ENCODE measurements at regions of chr17 and their contacts with region 1.

Region 1: GRCh38 chr17:77319211-77320043 is 178.7 kb downstream of the SEC14L1 start:
- DNase-seq: peak; percentile 86
- ATAC-seq: peak; percentile 48
- H3K4me3 ChIP-seq: peak overlapping the region; percentile 36; the same call in 1 of the 2 replicates
- H3K27ac ChIP-seq: peak overlapping the region; percentile 96
- H3K4me1 ChIP-seq: peaks cover 59% of the 10 kb centered on the region
- H3K27me3 ChIP-seq: no peaks in the 10 kb centered on the region
- CTCF ChIP-seq: no peak
- POLR2A ChIP-seq: peak; percentile 41; the same call in 1 of the 2 replicates
- RAD21 ChIP-seq: no peak

Region 2: GRCh38 chr17:77088455-77089123 is 230.8 kb before region 1 on chr17:
- CTCF ChIA-PET with region 1: no interaction called
- POLR2A ChIA-PET with region 1: no interaction called
- dilution Hi-C with region 1: no loop called
- in situ Hi-C with region 1: no loop called
- intact Hi-C with region 1: loop called (anchors 5 kb)
- DNase-seq: peak; percentile 98
- ATAC-seq: peak; percentile 95
- H3K4me3 ChIP-seq: peak overlapping the region; percentile 61
- H3K27ac ChIP-seq: peak overlapping the region; percentile 78
- H3K4me1 ChIP-seq: no peaks in the 10 kb centered on the region
- H3K27me3 ChIP-seq: peaks cover 2% of the 10 kb centered on the region; the same call in 1 of the 2 replicates
- CTCF ChIP-seq: peak; percentile 90
- POLR2A ChIP-seq: peak; percentile 62; the same call in 1 of the 2 replicates
- RAD21 ChIP-seq: peak; percentile 56

Region 3: DNA sequence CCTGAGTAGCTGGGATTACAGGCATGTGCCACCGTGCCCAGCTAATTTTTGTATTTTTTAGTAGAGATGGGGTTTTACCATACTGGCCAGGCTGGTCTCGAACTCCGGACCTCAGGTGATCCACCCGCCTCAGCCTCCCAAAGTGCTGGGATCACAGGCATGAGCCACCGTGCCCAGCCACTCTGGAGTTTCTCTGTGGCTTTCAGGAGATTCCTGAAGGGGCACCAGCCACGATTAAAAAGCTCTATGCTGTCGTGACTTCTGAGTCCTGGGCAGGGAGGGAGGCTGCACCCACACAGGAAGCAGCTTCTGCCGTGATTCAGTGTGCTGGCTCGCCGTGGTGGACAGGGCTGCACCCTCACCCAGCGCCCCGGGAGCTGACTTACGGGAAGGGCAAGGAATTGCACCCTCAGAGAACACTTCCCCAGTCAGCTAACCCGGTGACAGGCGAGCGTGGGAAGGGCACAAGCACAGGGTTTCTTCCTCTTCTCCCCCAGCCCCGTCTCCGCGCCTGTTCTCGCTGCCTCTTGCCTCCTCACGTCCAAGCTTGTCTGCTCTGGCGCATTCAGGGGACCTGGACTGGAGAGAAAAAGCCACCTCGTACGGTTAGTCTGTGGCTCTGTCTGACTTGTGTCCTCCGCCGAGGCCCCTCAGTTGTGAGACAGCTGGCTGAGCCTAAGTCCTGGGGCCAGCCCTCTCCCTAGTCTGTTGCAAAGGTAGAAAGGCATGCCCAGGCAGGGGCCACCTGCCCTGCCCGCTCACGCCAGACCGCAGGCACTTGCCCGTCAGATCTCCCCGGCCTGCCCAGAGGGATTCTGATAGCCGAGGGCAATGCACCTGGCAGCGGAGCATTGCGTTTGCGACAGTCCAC is 33.7 kb before region 1 on chr17:
- CTCF ChIA-PET with region 1: no interaction called
- POLR2A ChIA-PET with region 1: no interaction called
- dilution Hi-C with region 1: no loop called
- in situ Hi-C with region 1: no loop called
- intact Hi-C with region 1: loop called (anchors 1 kb)
- DNase-seq: peak; percentile 89
- ATAC-seq: peak; percentile 66
- H3K4me3 ChIP-seq: no peak overlapping the region
- H3K27ac ChIP-seq: peak overlapping the region; percentile 93
- H3K4me1 ChIP-seq: peaks cover 45% of the 10 kb centered on the region
- H3K27me3 ChIP-seq: no peaks in the 10 kb centered on the region
- CTCF ChIP-seq: no peak
- POLR2A ChIP-seq: no peak; the same call in 1 of the 2 replicates
- RAD21 ChIP-seq: peak; percentile 13

Measured in IMR-90 (cell line).